ENCODE measurements at regions of chr12 and their contacts with region 1.

Region 1: DNA sequence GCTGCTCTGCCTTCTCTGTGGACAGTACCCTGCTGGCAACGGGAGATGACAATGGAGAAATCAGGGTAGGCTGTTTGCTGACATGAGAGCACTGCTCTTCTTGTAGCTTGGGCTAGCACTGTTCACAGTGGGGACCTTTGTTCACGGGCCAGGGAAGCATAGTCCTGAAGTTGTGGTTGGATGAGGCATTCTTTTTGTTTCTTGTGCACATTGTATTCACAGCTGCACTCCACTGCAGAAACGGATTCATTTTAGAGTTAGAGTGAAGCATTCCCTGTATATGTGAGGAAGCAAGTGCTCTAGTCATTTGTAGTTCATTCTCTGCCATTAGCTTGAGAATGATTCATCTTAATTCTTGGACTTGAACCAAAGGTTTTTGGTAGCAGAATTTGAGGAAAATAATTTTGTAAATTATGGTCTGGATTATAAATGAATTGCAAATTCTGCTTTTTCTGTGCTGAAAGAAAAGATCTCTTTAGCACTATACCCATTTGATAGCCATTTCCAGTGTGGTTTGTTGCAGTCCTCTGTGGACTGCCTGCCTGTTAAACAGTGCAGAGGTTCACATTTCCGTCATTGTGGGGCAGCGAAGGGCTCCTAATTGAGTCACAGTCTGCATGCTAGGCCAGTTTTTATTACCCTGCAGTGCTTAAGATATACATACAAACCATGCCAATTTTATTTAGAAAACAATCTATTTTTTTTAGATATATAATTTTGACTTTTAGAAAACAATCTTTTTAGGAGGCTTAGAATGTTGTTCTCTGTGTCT is 80.6 kb downstream of the APAF1 start:
- DNase-seq: peak; percentile 81
- H3K4me3 Mint-ChIP-seq: no peak overlapping the region
- H3K27ac Mint-ChIP-seq: no peak overlapping the region
- H3K4me1 Mint-ChIP-seq: peaks cover 13% of the 10 kb centered on the region
- H3K27me3 Mint-ChIP-seq: no peaks in the 10 kb centered on the region

Region 2: GRCh38 chr12:98544751-98545150 is 180.9 kb before region 1 on chr12:
- CTCF ChIA-PET with region 1: no interaction called
- POLR2A ChIA-PET with region 1: no interaction called
- intact Hi-C with region 1: no loop called
- DNase-seq: no peak
- H3K4me3 Mint-ChIP-seq: no peak overlapping the region
- H3K27ac Mint-ChIP-seq: no peak overlapping the region
- H3K4me1 Mint-ChIP-seq: peaks cover 19% of the 10 kb centered on the region
- H3K27me3 Mint-ChIP-seq: no peaks in the 10 kb centered on the region

Region 3: GRCh38 chr12:98736352-98737321 is 11.0 kb after region 1 on chr12:
- CTCF ChIA-PET with region 1: interaction called, 35 read pairs
- POLR2A ChIA-PET with region 1: no interaction called
- intact Hi-C with region 1: loop called (anchors 1 kb)
- DNase-seq: no peak
- H3K4me3 Mint-ChIP-seq: no peak overlapping the region
- H3K27ac Mint-ChIP-seq: no peak overlapping the region
- H3K4me1 Mint-ChIP-seq: peaks cover 44% of the 10 kb centered on the region
- H3K27me3 Mint-ChIP-seq: no peaks in the 10 kb centered on the region

Region 4: GRCh38 chr12:98799146-98799810 is 73.6 kb after region 1 on chr12:
- CTCF ChIA-PET with region 1: interaction called, 5 read pairs
- POLR2A ChIA-PET with region 1: no interaction called
- intact Hi-C with region 1: loop called (anchors 5 kb)
- DNase-seq: no peak
- H3K4me3 Mint-ChIP-seq: no peak overlapping the region
- H3K27ac Mint-ChIP-seq: no peak overlapping the region
- H3K4me1 Mint-ChIP-seq: no peaks in the 10 kb centered on the region
- H3K27me3 Mint-ChIP-seq: peaks cover 4% of the 10 kb centered on the region

Region 5: DNA sequence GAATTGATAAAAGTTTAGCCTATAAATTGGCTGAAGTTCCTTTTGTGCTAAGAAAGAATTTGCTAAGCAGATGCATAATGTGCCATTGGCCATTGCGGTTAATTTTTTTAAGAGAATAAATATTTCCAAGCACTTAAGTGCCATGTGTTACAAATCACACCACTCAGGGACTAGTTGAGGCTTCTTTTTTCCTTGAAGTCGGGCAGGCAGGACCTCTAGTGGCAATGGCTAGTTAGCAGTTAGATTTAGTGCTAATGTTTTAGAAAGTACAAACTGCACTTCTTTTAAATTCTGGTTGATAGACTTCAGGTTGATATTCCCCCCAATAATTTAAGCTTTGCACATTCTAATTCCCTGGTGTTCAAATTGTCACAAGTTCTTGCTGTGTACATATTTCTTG is 213.7 kb after region 1 on chr12:
- CTCF ChIA-PET with region 1: interaction called, 3 read pairs
- POLR2A ChIA-PET with region 1: no interaction called
- intact Hi-C with region 1: loop called (anchors 1 kb)
- DNase-seq: no peak
- H3K4me3 Mint-ChIP-seq: no peak overlapping the region
- H3K27ac Mint-ChIP-seq: no peak overlapping the region
- H3K4me1 Mint-ChIP-seq: no peaks in the 10 kb centered on the region
- H3K27me3 Mint-ChIP-seq: peaks cover 12% of the 10 kb centered on the region

Region 6: GRCh38 chr12:98998697-98999299 is 273.1 kb after region 1 on chr12:
- CTCF ChIA-PET with region 1: interaction called, 26 read pairs
- POLR2A ChIA-PET with region 1: no interaction called
- intact Hi-C with region 1: loop called (anchors 2 kb)
- DNase-seq: no peak
- H3K4me3 Mint-ChIP-seq: no peak overlapping the region
- H3K27ac Mint-ChIP-seq: no peak overlapping the region
- H3K4me1 Mint-ChIP-seq: no peaks in the 10 kb centered on the region
- H3K27me3 Mint-ChIP-seq: peaks cover 2% of the 10 kb centered on the region